Right ventricle myocardium superior (tissue), 1 donor: ENCODE measurements at regions of chr16 and their contacts with region 1.

Region 1: GRCh38 chr16:30429678-30430427 is at the start of gene DCTPP1:
- DNase-seq: peak; percentile 96
- ATAC-seq: peak; percentile 98
- total RNA-seq, gene DCTPP1: 38.4 TPM

Region 2: GRCh38 chr16:30370444-30371247 is 59.2 kb before region 1 on chr16 and contains the start of gene TBC1D10B:
- intact Hi-C with region 1: no loop called
- DNase-seq: peak; percentile 97
- ATAC-seq: peak; percentile 88
- total RNA-seq, gene TBC1D10B: 24.4 TPM

Region 3: DNA sequence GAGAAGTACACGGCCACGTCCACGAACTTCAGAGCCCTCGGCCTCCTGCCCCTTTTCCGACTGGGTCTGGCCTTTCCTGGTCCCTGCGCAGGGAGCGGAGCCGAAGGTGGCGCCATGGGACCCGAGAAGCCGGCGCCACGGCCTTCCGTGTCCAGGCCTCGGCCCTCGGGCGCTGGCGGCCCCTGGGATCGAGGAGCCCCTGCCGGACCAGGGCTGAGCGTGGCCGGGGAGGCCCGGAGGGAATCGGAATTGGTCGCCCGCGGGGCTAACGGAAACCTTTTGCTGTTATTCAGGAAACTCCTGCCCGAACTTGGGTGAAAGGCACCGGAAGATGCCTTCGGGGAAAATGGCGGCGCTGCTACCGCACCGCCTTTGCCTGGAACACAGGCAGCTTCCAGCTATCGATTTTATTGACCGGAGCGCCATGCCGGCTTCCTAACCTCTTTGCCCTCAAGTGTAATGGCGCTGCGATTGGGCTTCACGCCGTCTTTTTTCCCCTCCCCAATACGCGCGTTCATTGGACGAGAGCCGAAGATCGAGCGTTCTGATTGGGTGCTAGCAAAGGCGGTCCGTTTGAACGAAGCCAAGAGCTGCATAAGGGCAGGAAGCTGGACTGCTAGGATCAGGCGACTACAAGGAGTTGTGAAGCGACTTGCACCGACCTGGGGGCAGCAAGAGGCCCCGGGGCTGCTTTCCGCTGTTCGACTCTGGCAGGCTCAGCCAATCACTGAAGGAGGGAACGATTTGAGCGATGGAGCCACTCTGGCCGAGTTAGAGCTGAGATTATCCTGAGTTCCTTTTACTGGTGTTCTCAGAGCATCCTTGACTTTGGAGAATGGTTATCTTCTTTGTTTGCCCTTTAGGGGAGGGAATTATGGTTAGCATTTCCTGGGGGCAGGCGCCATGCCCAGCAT is 180.3 kb after region 1 on chr16 and contains the start of gene ZNF689:
- intact Hi-C with region 1: loop called (anchors 5 kb)
- DNase-seq: peak; percentile 93
- ATAC-seq: peak; percentile 99
- total RNA-seq, gene ZNF689: 4.4 TPM